ENCODE measurements at regions of chr10 and their contacts with region 1.

Region 1: DNA sequence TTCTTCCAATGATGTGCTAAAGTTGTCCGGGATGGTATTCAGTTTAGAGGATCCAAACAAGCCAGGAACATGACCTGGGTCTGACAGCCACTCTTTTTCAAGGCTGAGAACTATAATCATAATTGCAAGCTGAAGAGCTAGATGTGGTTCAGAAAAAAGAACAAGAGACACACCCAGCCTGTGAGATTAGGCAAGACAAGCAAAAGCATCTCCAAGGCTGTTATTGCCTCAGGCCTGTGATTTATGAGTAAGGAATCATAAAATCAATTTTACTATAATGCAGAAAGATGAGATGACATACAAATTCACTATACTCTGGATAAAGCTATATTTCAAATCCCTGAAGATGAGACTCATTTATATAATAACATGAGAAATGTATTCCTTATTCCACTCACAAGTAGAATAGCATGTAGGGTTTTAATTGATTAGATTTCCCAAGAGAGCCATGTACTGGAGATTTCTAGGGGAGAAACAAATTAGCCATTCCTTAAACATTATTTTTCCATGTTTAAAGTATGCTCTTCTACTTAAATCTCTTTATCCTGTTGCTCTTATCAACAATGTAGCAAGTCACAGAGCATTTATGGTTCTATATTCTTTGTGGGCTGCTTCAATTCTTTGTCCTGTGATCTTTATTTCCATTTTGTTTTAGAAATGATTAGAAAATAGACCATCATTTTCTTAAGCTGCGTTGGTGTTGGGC is 47.4 kb downstream of the FHIP2A start:
- DNase-seq: no peak
- H3K4me3 ChIP-seq: no peak overlapping the region
- H3K4me3 Mint-ChIP-seq: no peak overlapping the region
- H3K27ac Mint-ChIP-seq: no peak overlapping the region
- H3K4me1 ChIP-seq: no peaks in the 10 kb centered on the region
- H3K4me1 Mint-ChIP-seq: no peaks in the 10 kb centered on the region
- H3K27me3 ChIP-seq: no peaks in the 10 kb centered on the region; the same call in 1 of the 2 replicates
- H3K27me3 Mint-ChIP-seq: no peaks in the 10 kb centered on the region
- CTCF ChIP-seq: no peak

Region 2: DNA sequence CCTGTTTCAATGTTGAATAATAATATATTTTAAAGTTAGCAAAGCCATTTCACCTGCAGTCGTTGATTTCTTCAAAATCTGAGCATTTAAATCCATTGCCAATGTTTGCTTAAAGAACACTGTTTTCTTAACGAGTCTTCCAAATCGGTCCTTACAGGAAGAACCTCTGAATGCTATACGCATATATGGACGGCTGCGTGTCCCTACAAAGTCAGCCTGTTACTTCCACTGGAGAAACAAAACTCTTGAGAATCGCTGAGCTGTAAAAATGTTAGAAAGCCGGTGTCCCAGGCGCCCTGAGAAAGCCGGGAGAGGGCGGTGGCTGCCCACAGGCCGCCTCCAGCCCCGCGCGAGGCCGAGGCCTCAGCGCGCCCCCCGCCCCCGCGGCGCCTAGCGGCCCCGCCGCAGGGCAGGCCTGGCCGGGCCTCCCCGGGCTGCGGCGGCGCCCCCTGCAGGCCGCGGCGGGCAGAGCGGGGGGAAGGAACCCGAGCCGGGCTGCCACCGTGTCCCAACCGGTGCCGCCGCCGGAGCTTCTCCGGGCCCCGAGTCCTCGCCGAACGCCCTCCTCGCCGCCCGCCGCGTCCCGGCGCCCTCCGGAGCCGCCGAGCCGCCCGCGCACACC is 47.6 kb before region 1 on chr10 and contains the start of gene FHIP2A:
- CTCF ChIA-PET with region 1: interaction called, 13 read pairs
- POLR2A ChIA-PET with region 1: no interaction called
- intact Hi-C with region 1: no loop called
- DNase-seq: peak; percentile 69 to 93
- H3K4me3 ChIP-seq: peak within 1 kb of the TSS; percentile 90
- H3K4me3 Mint-ChIP-seq: peak within 1 kb of the TSS; percentile 92
- H3K27ac Mint-ChIP-seq: peak within 1 kb of the TSS; percentile 73
- H3K4me1 ChIP-seq: no peaks in the 10 kb centered on the region
- H3K4me1 Mint-ChIP-seq: peaks cover 10% of the 10 kb centered on the region
- H3K27me3 ChIP-seq: no peaks in the 10 kb centered on the region
- H3K27me3 Mint-ChIP-seq: peaks cover 4% of the 10 kb centered on the region
- CTCF ChIP-seq: peak; percentile 41 to 58
- total RNA-seq, gene FHIP2A: 15.2 and 15.3 TPM in 2 replicates

Region 3: GRCh38 chr10:114970515-114970914 is 101.5 kb after region 1 on chr10:
- CTCF ChIA-PET with region 1: no interaction called
- POLR2A ChIA-PET with region 1: no interaction called
- intact Hi-C with region 1: no loop called
- DNase-seq: no peak
- H3K4me3 ChIP-seq: no peak overlapping the region
- H3K4me3 Mint-ChIP-seq: no peak overlapping the region
- H3K27ac Mint-ChIP-seq: no peak overlapping the region
- H3K4me1 ChIP-seq: no peaks in the 10 kb centered on the region
- H3K4me1 Mint-ChIP-seq: no peaks in the 10 kb centered on the region
- H3K27me3 ChIP-seq: no peaks in the 10 kb centered on the region
- H3K27me3 Mint-ChIP-seq: no peaks in the 10 kb centered on the region
- CTCF ChIP-seq: no peak